Activated CD4-positive, alpha-beta T cell treated with anti-CD3 and anti-CD28 coated beads for 36 hours (primary cell): ENCODE measurements at regions of chr16 and their contacts with region 1.

Region 1: DNA sequence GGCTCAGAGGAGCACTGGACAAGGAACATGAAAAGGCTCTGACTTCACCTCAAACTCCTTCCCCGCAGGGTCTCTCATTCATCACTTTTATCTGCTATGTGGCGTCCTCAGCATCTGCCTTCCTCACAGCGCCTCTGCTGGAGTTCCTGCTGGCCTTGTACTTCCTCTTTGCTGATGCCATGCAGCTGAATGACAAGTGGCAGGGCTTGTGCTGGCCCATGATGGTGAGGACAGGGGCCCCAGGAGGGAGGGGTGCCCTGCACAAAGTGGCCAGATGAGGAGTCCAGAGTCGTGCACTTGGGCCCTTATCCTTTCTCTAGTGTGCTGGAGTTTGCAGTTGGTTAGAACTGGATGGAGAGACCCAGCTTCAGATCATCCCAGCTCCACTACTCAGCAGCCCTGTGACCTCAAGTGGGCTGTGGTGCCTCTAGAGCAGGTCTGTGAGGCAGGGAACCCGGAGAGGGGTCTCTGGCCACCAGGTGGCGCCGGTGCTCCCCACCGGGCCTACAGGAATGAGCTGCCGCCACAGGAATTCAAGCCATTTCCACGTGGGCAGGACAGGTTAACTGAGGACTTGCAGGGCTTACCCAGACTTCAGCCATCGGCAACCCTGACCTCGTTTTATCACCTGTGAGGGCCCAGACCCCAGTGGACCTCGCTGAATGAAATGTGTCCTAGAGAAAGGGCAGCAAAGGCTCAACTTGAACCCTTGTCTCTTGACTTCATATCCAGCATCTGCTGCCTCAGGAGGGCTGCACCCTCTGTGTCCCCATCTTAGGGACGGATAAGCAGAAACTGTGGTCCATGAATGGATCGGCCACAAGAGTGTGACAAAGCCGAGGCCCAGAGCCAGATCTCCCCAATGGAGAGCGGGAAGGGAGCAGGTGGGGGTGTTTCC is 4.0 kb downstream of the CMTM3 start:
- DNase-seq: peak; percentile 92
- ATAC-seq: peak; percentile 50
- H3K4me3 Mint-ChIP-seq: no peak overlapping the region
- H3K27ac Mint-ChIP-seq: peak overlapping the region; percentile 78
- H3K4me1 Mint-ChIP-seq: peaks cover 35% of the 10 kb centered on the region
- H3K27me3 Mint-ChIP-seq: no peaks in the 10 kb centered on the region

Region 2: GRCh38 chr16:66483689-66484481 is 124.6 kb before region 1 on chr16:
- CTCF ChIA-PET with region 1: interaction called, 7 read pairs
- POLR2A ChIA-PET with region 1: no interaction called
- intact Hi-C with region 1: loop called in 1 of 2 experiments (anchors 2 kb)
- DNase-seq: peak; percentile 89
- ATAC-seq: peak; percentile 77
- H3K4me3 Mint-ChIP-seq: no peak overlapping the region
- H3K27ac Mint-ChIP-seq: peak overlapping the region; percentile 55
- H3K4me1 Mint-ChIP-seq: peaks cover 18% of the 10 kb centered on the region
- H3K27me3 Mint-ChIP-seq: no peaks in the 10 kb centered on the region

Region 3: GRCh38 chr16:66552286-66553177 is 56.0 kb before region 1 on chr16 and contains the start of gene CKLF:
- CTCF ChIA-PET with region 1: interaction called, 11 read pairs
- POLR2A ChIA-PET with region 1: no interaction called
- intact Hi-C with region 1: loop called (anchors 1 to 2 kb)
- DNase-seq: peak; percentile 94
- ATAC-seq: peak; percentile 73
- H3K4me3 Mint-ChIP-seq: peak within 1 kb of the TSS; percentile 97
- H3K27ac Mint-ChIP-seq: peak within 1 kb of the TSS; percentile 94
- H3K4me1 Mint-ChIP-seq: peaks cover 76% of the 10 kb centered on the region
- H3K27me3 Mint-ChIP-seq: no peaks in the 10 kb centered on the region
- total RNA-seq, gene CKLF: 93.5 to 122 TPM

Region 4: GRCh38 chr16:66596986-66597848 is 11.3 kb before region 1 on chr16:
- CTCF ChIA-PET with region 1: interaction called, 20 read pairs
- POLR2A ChIA-PET with region 1: no interaction called
- intact Hi-C with region 1: no loop called
- DNase-seq: no peak
- ATAC-seq: peak; percentile 69
- H3K4me3 Mint-ChIP-seq: no peak overlapping the region
- H3K27ac Mint-ChIP-seq: peak overlapping the region; percentile 30
- H3K4me1 Mint-ChIP-seq: peaks cover 31% of the 10 kb centered on the region
- H3K27me3 Mint-ChIP-seq: no peaks in the 10 kb centered on the region

Region 5: GRCh38 chr16:66751303-66751991 is 143.0 kb after region 1 on chr16 and contains the start of gene DYNC1LI2:
- CTCF ChIA-PET with region 1: interaction called, 5 read pairs
- POLR2A ChIA-PET with region 1: no interaction called
- intact Hi-C with region 1: loop called in 1 of 2 experiments (anchors 1 kb)
- DNase-seq: peak; percentile 89
- ATAC-seq: peak; percentile 93
- H3K4me3 Mint-ChIP-seq: peak within 1 kb of the TSS; percentile 81
- H3K27ac Mint-ChIP-seq: peak within 1 kb of the TSS; percentile 80
- H3K4me1 Mint-ChIP-seq: peaks cover 38% of the 10 kb centered on the region
- H3K27me3 Mint-ChIP-seq: peaks cover 9% of the 10 kb centered on the region
- total RNA-seq, gene DYNC1LI2: 32.3 to 35.7 TPM